Lower lobe of right lung (tissue), 2 donors: ENCODE measurements at regions of chr6 and their contacts with region 1.

Region 1: GRCh38 chr6:2900821-2901644 is 2.1 kb downstream of the SERPINB9 start:
- DNase-seq: no peak
- ATAC-seq: no peak
- H3K4me3 ChIP-seq: peak overlapping the region; percentile 78
- H3K27ac ChIP-seq: peak overlapping the region; percentile 14
- H3K4me1 ChIP-seq: peaks cover 32% of the 10 kb centered on the region
- H3K27me3 ChIP-seq: no peaks in the 10 kb centered on the region
- CTCF ChIP-seq: no peak

Region 2: DNA sequence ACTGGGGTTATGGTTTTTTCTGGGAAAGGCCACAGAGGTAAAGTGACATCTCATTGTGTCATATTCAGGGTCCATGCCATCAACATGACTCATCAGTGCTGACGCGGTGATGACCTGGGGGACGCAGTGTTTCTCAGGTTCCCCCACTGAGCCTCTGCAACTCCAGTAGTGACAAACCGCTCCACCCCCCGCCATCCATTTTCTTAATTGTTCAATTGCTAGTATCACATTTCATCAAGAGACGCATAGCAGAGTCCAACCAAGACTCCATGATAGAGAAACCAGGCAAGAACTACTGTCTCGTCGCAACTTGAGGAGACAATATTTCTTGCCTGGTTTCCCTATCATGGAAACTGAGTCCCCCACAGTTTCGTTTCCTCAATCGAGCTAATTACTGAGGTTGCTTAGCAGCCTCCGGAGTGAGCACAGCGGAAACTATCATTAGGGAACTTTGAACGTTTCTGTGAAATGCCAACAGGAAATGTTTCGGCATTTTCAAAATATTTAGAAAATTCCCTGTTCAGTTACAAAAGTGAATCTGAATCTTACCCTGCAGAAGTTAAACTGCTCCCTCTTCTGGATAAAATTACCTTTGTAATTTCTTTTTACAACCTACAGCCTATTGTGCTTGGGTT is 47.2 kb before region 1 on chr6:
- intact Hi-C with region 1: loop called (anchors 10 kb)
- DNase-seq: no peak
- ATAC-seq: peak; percentile 44 to 61
- H3K4me3 ChIP-seq: peak overlapping the region; percentile 34
- H3K27ac ChIP-seq: peak overlapping the region; percentile 81
- H3K4me1 ChIP-seq: peaks cover 78% of the 10 kb centered on the region
- H3K27me3 ChIP-seq: no peaks in the 10 kb centered on the region
- CTCF ChIP-seq: peak; percentile 44